ENCODE measurements at regions of chr19 and their contacts with region 1.

Region 1: GRCh38 chr19:42108527-42109389 is 23.5 kb downstream of the POU2F2 start:
- DNase-seq: peak; percentile 94
- H3K4me3 Mint-ChIP-seq: no peak overlapping the region
- H3K27ac Mint-ChIP-seq: no peak overlapping the region
- H3K4me1 Mint-ChIP-seq: peaks cover 55% of the 10 kb centered on the region
- H3K27me3 Mint-ChIP-seq: no peaks in the 10 kb centered on the region

Region 2: GRCh38 chr19:42176990-42177685 is 68.4 kb after region 1 on chr19:
- CTCF ChIA-PET with region 1: interaction called, 21 read pairs
- POLR2A ChIA-PET with region 1: no interaction called
- intact Hi-C with region 1: no loop called
- DNase-seq: peak; percentile 85
- H3K4me3 Mint-ChIP-seq: no peak overlapping the region
- H3K27ac Mint-ChIP-seq: no peak overlapping the region
- H3K4me1 Mint-ChIP-seq: peaks cover 14% of the 10 kb centered on the region
- H3K27me3 Mint-ChIP-seq: peaks cover 11% of the 10 kb centered on the region

Region 3: GRCh38 chr19:42184401-42184861 is 75.7 kb after region 1 on chr19:
- CTCF ChIA-PET with region 1: interaction called, 17 read pairs
- POLR2A ChIA-PET with region 1: no interaction called
- intact Hi-C with region 1: loop called (anchors 1 kb)
- DNase-seq: peak; percentile 83
- H3K4me3 Mint-ChIP-seq: no peak overlapping the region
- H3K27ac Mint-ChIP-seq: peak overlapping the region; percentile 19
- H3K4me1 Mint-ChIP-seq: peaks cover 37% of the 10 kb centered on the region
- H3K27me3 Mint-ChIP-seq: no peaks in the 10 kb centered on the region

Region 4: GRCh38 chr19:42295831-42296525 is 187.2 kb after region 1 on chr19:
- CTCF ChIA-PET with region 1: interaction called, 10 read pairs
- POLR2A ChIA-PET with region 1: no interaction called
- intact Hi-C with region 1: no loop called
- DNase-seq: peak; percentile 92
- H3K4me3 Mint-ChIP-seq: no peak overlapping the region
- H3K27ac Mint-ChIP-seq: peak overlapping the region; percentile 28
- H3K4me1 Mint-ChIP-seq: peaks cover 9% of the 10 kb centered on the region
- H3K27me3 Mint-ChIP-seq: no peaks in the 10 kb centered on the region